ENCODE measurements at regions of chr17 and their contacts with region 1.

Region 1: GRCh38 chr17:33779225-33779591 is 475.9 kb upstream of the CCL2 start:
- DNase-seq: peak; percentile 52
- CTCF ChIP-seq: peak; percentile 85

Region 2: GRCh38 chr17:34146440-34147043 is 367.3 kb after region 1 on chr17:
- in situ Hi-C with region 1: loop called (anchors 10 kb)
- DNase-seq: peak; percentile 51
- CTCF ChIP-seq: peak; percentile 75